ENCODE measurements at regions of chr12 and their contacts with region 1.

Region 1: GRCh38 chr12:17866802-17867201 is 223.2 kb downstream of the RERGL start:
- DNase-seq: no peak

Region 2: DNA sequence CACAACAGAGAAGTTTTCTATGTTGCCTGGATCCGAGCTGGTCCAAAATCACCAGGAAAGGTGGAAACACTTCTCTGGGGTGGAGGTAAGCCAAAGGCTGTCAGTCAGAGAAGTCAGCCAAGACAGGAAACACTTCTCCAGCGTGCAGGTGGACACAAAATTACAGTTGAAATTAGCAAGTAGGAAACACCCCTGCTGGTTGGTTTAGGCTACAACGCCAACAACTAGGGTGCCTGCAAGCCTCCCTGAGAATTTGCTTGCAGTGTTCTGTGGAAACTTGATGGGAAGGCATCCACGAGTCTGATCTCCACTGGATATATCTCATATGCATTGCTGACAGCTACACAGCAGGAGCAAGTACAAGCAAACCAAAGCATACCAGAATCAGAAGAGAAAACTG is 377.4 kb before region 1 on chr12:
- in situ Hi-C with region 1: no loop called
- DNase-seq: no peak

Region 3: DNA sequence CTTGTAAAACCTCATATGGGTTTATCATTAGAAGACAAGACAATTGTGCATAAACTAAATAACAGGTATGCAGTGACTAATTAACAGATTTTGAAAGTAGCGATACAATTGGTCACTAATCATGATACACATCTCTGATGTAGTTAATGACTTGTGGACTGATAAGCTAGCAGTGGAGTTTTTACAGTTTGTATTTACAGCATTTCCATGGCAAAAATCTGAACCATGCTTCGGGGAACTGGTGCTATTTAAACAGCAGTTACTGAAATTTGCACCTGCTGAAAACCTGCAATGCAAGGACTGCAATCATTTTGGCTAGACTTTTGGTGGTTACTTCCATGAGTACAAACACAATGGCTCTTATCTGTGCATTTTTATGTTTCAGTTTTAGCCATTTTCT is 248.0 kb before region 1 on chr12:
- in situ Hi-C with region 1: no loop called
- DNase-seq: no peak

Region 4: GRCh38 chr12:17778242-17778641 is 88.6 kb before region 1 on chr12:
- in situ Hi-C with region 1: loop called (anchors 10 kb)
- DNase-seq: no peak